ENCODE measurements at regions of chr19 and their contacts with region 1.

Region 1: DNA sequence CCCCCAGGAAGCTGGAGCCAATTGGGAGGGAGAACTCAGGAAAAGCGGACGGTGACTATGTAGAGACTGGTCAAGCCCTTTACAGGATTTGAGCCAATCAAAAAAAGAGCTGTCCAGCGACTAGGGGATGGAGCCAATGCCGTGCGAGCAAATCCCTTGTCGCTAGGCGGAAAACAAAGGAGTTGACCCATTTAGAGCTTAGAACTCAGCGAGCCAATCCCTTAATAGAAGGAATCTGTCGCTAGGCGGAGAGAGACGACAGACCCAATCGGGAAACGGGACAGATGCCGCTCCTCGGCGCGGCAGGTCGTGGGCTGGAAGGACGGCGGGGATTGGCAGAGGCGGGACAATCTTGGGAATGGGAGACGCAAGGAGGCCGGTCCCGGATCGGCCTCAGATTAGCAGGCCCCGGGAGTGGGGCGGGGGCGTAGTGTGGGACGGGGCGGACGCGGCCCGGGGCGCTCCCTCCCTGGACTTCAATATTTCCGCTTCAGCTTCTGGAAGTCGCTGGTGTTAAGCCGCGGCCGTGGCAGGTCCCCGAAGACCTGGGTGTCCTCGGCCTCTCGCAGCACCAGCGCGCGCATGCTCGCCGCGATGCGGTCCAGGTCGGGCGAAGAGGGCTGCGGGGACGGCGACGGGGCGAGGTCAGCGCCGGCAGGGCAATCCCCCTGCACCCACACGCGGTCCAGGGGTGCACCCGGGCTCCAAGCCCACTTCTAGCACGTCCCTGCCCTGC is 2.2 kb upstream of the PNKP start:
- DNase-seq: peak; percentile 98 to 99
- H3K4me3 ChIP-seq: peak overlapping the region; percentile 48; the same call in 1 of the 2 replicates
- H3K27ac ChIP-seq: no peak overlapping the region
- H3K4me1 ChIP-seq: peaks cover 36% of the 10 kb centered on the region
- H3K27me3 ChIP-seq: no peaks in the 10 kb centered on the region
- CTCF ChIP-seq: no peak

Region 2: GRCh38 chr19:49746206-49747091 is 123.2 kb before region 1 on chr19:
- CTCF ChIA-PET with region 1: interaction called, 11 read pairs
- POLR2A ChIA-PET with region 1: no interaction called
- intact Hi-C with region 1: no loop called
- DNase-seq: no peak
- H3K4me3 ChIP-seq: no peak overlapping the region
- H3K27ac ChIP-seq: no peak overlapping the region
- H3K4me1 ChIP-seq: no peaks in the 10 kb centered on the region
- H3K27me3 ChIP-seq: no peaks in the 10 kb centered on the region
- CTCF ChIP-seq: no peak

Region 3: DNA sequence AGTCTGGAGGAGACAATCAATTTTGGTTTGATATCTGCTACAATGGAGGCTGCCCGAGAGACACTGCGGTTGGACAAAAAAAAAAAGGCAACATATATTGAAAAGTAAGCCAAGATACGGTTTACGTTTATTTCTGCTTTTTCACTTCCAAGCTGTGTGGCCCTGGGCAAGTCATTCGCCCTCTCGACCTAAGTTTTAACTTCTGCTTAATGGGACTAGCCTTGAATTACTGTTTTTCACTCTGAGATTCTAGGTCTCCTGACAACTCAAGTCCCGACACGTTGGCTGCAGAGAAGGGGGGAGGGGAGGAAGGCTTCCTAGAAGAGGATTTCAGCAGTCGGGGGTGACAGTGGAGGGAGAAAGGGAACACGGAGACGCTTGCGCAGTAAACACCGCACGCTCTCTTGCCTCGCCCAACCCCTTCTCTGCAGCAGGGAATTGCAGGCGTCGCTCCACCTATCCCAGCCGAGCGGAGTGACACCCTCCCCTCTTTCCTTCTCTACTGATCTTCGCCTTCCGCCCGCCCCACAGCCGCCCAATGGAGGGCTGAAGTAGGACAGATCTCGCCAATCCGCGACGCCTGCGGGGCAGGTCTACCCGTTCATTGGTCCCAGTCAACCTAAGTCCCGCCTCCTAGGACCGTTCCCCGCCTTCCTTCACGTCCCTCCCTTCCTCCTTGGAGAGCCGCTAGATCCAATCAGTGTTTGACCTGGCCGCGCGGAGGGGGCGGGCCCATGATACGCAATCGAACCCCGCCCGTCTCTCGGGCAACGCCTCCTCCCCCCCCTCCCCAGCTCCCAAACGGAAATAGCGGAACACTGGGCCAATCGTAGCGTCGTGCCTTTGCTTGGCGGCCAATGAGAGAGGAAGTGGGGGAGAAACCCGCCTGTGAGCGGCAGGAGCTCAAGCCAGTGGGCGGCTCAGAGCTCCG is 103.3 kb before region 1 on chr19:
- CTCF ChIA-PET with region 1: no interaction called
- POLR2A ChIA-PET with region 1: interaction called, 13 read pairs
- intact Hi-C with region 1: no loop called
- DNase-seq: peak; percentile 99
- H3K4me3 ChIP-seq: peak overlapping the region; percentile 59
- H3K27ac ChIP-seq: peak overlapping the region; percentile 88
- H3K4me1 ChIP-seq: peaks cover 17% of the 10 kb centered on the region
- H3K27me3 ChIP-seq: no peaks in the 10 kb centered on the region
- CTCF ChIP-seq: no peak

Region 4: DNA sequence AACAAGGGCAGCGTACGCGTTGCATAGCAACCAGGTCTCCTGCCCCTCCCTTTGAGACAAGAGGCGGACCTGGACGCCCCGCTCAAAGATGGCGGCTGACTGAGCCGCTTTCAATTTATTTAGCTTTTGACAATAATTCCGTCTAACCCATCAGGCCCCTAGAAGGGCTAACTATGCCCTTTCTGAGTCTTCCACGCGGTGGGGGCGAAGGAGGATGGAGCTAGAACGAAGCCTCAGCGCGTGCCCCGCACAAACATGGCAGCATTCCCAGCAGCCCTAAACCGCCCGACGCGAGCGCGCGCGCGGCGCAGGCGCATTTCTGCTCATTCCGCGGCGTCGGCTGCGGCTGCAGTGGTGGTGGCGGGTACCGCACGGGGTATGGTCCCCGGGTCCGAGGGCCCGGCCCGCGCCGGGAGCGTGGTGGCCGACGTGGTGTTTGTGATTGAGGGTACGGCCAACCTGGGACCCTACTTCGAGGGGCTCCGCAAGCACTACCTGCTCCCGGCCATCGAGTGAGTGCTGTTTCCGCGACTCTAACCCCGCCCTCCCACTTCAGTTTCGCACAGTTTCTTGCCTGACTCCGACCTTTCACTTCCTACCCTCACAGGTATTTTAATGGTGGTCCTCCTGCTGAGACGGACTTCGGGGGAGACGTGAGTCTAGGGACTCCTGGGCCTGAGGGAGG is 51.5 kb before region 1 on chr19 and contains the start of gene MED25:
- CTCF ChIA-PET with region 1: no interaction called
- POLR2A ChIA-PET with region 1: no interaction called
- intact Hi-C with region 1: loop called (anchors 5 kb)
- DNase-seq: peak; percentile 69 to 89
- H3K4me3 ChIP-seq: peak within 1 kb of the TSS; percentile 84
- H3K27ac ChIP-seq: peak within 1 kb of the TSS; percentile 72
- H3K4me1 ChIP-seq: peaks cover 24% of the 10 kb centered on the region
- H3K27me3 ChIP-seq: no peaks in the 10 kb centered on the region
- CTCF ChIP-seq: no peak
- total RNA-seq, gene MED25: 92.2 and 99.6 TPM in 2 replicates

Region 5: DNA sequence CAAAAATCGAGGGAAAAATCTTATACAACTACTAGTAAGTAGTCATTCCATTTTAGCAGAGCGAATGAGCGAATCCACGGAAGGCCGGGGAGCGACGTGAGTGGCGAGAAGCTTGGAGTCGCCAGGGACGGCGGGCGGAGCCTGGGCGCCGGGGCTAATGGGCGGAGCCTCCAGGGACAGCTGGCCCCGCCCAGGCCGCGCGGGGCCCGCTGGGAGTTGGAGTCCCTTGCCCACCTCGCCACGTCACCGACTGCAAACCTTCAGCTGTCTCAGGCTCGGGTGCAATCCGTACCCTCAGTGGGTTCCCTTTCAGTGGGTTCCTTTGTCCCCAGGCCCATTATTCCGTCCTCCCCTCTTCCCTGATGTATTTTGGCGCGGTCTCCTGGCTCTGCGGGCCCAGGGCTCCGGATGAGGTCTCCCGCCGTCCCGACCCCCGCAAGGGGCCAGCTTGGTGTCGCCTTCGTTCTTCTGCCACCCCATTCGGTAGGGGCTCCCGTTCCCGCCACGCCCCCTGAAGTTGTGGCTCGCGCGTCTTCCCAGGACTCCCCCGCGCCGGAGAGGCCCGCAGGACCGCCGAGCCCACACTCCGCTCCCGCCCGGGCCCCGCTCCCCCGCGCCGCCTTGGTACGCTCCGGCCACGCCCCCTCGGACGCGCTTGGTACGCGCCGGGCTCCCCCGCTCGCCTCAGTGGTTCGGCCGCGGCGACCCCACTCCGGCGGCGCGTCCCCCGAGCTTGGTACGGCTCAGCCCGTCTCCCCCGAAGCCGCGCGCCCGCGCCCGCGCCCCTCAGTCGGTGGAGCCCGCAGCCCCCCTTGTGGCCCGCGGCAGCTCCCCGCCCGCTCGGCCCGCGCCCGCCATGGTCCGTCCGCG is 18.9 kb before region 1 on chr19 and contains the start of gene PTOV1:
- CTCF ChIA-PET with region 1: no interaction called
- POLR2A ChIA-PET with region 1: interaction called, 20 read pairs
- intact Hi-C with region 1: no loop called
- DNase-seq: peak; percentile 76 to 92
- H3K4me3 ChIP-seq: peak within 1 kb of the TSS; percentile 99
- H3K27ac ChIP-seq: peak within 1 kb of the TSS; percentile 90
- H3K4me1 ChIP-seq: peaks cover 37% of the 10 kb centered on the region
- H3K27me3 ChIP-seq: no peaks in the 10 kb centered on the region
- CTCF ChIP-seq: no peak
- total RNA-seq, gene PTOV1: 151 and 155 TPM in 2 replicates

Region 6: DNA sequence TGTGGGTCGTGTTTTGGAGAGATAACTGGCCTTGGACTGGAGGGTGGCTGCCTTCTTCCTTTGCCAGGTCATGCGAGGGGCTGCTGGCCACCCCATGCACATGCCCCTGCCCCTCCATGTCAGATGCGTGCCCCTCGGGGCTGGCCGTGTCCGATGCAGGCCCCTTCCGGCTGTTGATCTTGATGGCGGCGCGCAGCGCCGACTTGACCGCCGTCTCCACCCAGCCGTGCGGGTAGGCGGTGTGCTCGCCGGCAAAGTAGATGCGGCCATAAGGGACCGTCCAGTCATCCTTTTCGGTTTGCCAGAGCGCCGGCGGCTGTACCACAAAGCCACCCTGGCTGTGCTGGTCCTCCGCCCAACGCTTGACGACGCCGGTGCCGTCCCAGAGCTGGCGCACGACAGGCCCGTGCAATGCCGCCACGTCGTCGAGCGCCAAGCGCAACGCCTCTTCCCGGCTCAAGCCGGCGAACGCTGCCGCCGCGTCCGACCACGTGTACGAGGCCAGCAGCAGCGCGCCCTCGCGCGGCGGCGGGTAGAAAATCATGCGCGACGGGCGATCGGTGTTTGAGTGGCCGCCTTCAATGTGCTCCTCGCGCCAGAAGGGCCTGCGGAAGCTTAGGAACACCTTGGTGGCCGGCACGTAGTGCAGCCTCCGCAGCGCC is 20.2 kb after region 1 on chr19:
- CTCF ChIA-PET with region 1: interaction called, 11 read pairs
- POLR2A ChIA-PET with region 1: interaction called, 16 read pairs
- intact Hi-C with region 1: no loop called
- DNase-seq: peak; percentile 34 to 74
- H3K4me3 ChIP-seq: peak overlapping the region; percentile 57
- H3K27ac ChIP-seq: no peak overlapping the region
- H3K4me1 ChIP-seq: no peaks in the 10 kb centered on the region; the same call in 1 of the 2 replicates
- H3K27me3 ChIP-seq: no peaks in the 10 kb centered on the region
- CTCF ChIP-seq: peak; percentile 77

Region 7: DNA sequence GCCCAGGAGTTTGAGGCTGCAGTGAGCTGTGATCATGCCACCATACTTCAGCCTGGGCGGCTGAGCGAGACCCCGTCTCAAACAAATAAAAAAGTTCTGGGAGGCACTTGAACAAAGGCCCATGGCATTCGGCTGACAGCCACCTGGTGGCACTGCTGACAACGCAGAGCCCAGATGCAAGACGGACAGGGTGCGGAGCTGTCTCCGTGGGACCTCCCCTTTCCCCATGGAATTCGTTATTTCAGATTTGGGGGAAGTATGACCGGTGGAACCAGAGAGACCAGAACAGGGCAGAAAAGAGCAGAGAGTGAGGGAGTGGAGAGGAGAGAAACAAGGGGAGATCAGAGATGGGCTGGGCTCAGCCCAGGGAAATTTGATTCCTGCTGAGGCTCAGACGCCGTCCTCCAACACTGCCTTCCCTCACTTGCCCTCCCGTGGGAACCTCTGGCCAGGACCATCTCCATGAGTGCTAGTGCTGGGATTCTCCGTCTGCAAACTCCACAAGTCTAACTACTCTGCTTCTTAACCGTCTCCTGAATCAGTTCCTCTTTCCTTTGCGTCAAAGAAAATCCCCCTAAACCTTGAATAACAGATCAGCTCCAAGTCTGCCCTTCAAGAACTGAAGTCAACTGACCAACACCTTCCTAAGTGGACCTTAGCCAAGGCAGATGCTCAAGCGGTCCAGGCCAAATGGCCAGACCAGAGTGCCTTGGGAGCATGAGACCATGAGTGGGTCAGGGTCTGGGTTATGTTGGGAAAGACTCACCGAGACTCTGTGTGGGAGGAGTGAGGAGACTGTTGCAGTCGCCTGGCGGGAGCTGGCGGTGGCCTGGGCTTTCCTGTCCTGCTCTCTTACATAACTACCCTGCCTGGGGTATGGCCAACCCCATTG is 47.5 kb after region 1 on chr19:
- CTCF ChIA-PET with region 1: no interaction called
- POLR2A ChIA-PET with region 1: no interaction called
- intact Hi-C with region 1: no loop called
- DNase-seq: no peak
- H3K4me3 ChIP-seq: no peak overlapping the region
- H3K27ac ChIP-seq: no peak overlapping the region
- H3K4me1 ChIP-seq: no peaks in the 10 kb centered on the region
- H3K27me3 ChIP-seq: no peaks in the 10 kb centered on the region
- CTCF ChIP-seq: peak; percentile 34; the same call in 1 of the 2 replicates

Region 8: DNA sequence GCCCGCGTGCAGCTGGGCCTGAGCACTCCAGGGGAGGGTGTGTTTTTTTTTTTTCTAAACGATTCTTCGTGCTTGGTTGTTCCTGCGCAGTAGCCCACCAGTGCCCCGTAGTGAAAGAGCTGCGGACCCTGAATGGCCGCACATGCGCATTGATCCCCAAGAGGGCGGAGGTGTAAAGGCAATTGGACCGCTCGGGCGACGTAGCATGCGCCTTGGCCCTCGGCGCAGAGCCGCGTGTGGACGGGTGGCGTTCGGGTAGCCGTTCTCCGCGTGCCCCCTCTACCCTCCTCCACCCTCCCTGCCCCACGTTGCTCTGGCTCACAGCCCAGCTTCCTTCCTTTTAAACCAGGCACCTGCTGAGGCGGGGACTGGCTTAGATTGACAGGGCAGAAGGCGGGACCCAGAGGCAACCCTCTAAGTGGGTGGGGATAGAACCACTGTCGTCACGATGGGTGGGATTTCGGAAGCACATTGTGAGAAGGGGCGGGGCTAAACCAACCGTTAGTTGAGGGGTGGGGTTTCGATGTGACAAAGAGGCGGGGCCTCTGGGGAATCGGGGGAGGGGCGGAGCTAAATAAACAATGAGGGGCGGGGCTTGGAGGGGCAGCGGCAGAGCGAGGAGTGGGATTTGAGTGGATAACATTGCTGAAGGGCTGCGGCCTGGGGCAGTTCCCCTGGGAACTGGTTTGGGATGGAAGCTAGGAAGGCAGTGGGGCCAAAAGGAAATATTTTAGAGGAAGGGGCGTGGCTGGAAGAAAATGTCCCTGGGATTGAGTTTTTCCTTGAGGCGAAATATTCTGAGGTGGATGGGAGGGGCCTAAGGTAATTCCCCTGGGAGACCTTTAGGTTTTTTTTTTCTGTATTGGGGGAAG is 60.2 kb after region 1 on chr19:
- CTCF ChIA-PET with region 1: no interaction called
- POLR2A ChIA-PET with region 1: interaction called, 10 read pairs
- intact Hi-C with region 1: no loop called
- DNase-seq: peak; percentile 80 to 87
- H3K4me3 ChIP-seq: peak overlapping the region; percentile 83
- H3K27ac ChIP-seq: peak overlapping the region; percentile 79
- H3K4me1 ChIP-seq: peaks cover 18% of the 10 kb centered on the region
- H3K27me3 ChIP-seq: no peaks in the 10 kb centered on the region
- CTCF ChIP-seq: 0 out of 2 replicates have a peak, but pooled peaks have one; percentile 6

Measured in PC-9 (cell line).